ENCODE measurements at regions of chr6 and their contacts with region 1.

Region 1: GRCh38 chr6:11496152-11497060 is 41.1 kb upstream of the TMEM170B start:
- DNase-seq: peak; percentile 62
- CTCF ChIP-seq: peak; percentile 81

Region 2: DNA sequence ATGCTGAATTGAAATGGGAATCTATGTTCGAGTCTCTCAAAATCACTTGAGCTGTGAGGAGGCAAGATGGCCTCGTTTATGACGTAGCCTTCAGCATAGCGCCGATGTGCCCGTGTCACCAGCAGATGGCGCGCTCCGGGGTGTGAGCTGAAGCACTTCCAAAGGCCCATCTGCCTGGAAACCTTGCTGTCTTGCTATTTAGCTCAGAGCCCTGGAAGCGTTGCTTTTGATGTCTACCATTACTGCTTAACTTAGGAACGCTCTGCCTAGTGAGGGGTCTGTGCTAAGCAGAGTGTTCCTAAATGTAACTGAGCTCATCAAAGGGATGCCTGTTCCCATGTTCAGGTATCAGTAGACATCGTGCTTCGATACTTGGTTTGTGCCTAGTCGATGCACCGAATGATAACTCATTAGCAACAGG is 541.8 kb before region 1 on chr6:
- in situ Hi-C with region 1: loop called (anchors 25 kb)
- DNase-seq: peak; percentile 69
- CTCF ChIP-seq: peak; percentile 90

Region 3: DNA sequence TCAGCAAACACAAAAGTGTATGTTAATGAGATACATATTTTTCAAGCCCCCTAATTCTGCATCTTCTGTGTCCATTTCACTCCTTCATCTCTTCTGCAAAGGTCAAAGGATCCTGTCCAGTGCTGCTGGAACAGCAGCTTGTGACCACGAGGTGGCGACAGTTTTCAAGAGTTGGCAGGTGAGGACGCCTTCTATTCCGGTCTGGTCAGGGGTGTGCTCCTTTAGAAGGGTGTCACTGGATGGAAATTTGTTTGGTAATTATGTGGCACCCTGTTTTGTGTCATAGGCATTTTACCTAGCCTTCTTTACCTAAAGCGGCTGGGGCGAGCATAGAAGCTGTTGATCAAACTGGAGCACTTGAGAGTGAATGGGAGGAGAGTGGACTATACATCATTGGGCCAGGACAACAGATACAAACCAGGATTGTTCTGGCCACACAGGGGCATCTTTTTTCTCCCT is 352.0 kb before region 1 on chr6:
- in situ Hi-C with region 1: loop called (anchors 10 kb)
- DNase-seq: peak; percentile 78
- CTCF ChIP-seq: peak; percentile 97

Region 4: DNA sequence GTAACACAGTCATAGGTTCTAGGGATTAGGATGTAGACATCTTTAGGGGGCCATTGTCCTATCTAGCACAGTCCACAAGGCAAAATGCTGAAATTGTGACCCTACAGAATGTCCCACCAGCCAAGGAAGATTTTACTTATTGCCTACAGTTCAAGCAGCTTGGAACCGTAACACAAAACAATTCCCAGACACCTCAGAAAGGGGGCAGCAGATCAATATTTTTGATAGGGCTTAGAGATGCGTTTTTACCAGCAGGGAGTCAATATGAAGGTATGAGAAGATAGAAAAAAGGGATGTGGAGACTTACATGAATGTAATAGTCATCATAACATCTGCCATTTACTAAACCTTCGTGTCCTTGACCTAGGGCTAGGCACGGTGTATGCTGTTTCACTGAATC is 122.1 kb after region 1 on chr6:
- in situ Hi-C with region 1: no loop called
- DNase-seq: peak; percentile 24
- CTCF ChIP-seq: peak; percentile 31

Measured in GM13977 (cell line).